Activated CD8-positive, alpha-beta T cell treated with anti-CD3 and anti-CD28 coated beads, Interleukin-2, amount 10 ng/mL, durations not matched to agents 7 days and 5 days (primary cell): ENCODE measurements at regions of chr17 and their contacts with region 1.

Region 1: DNA sequence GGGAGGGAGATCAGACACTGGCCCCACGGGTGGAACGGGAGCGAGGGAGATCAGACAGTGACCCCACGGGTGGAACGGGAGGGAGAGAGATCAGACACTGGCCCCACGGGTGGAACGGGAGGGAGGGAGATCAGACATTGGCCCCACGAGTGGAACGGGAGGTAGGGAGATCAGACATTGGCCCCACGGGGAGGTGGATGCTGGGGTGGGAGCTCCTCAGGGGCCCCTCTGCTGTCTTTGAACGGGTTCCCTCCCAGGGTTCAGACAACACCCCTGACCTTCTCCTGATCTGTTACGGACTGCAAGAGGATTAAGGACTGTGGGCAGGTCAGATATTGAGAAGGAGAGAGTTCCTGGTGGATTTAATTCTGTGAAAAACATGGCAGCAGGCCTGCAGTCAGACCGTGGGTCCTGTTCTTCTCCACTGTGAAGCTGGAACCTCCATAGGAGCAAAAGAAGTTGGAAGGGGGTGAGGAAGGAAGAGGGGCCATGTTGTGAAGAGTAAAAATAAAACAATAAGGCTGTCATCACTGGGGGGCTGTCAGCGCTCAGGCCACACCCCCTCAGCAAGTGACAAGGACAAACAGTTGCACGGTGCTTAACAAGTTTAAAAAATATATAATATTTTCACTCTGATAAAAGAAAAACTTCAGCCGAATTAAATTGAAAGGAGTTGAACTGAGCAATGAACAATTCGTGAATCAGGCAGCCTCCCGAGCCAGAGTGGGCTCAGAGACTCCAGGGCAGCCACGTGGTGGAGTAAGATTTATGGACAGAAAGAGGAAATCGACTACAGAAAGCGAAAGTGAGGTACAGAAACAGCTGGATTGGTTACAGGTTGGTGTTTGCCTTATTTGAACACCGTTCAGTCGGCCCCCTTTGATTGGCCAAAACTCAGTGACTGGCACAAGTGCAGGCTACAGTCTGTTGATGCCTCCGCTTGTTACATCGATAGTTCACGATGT is 348.7 kb upstream of the TNRC6C start:
- DNase-seq: peak; percentile 88
- ATAC-seq: peak; percentile 98
- H3K4me3 Mint-ChIP-seq: peak overlapping the region; percentile 67
- H3K27ac Mint-ChIP-seq: peak overlapping the region; percentile 92
- H3K4me1 Mint-ChIP-seq: peaks cover 30% of the 10 kb centered on the region
- H3K27me3 Mint-ChIP-seq: peaks cover 5% of the 10 kb centered on the region

Region 2: GRCh38 chr17:77666881-77667395 is 57.1 kb after region 1 on chr17:
- CTCF ChIA-PET with region 1: interaction called, 3 read pairs
- POLR2A ChIA-PET with region 1: interaction called, 16 read pairs
- DNase-seq: peak; percentile 93
- ATAC-seq: peak; percentile 94
- H3K4me3 Mint-ChIP-seq: peak overlapping the region; percentile 82
- H3K27ac Mint-ChIP-seq: peak overlapping the region; percentile 97
- H3K4me1 Mint-ChIP-seq: peaks cover 51% of the 10 kb centered on the region
- H3K27me3 Mint-ChIP-seq: peaks cover 4% of the 10 kb centered on the region

Region 3: DNA sequence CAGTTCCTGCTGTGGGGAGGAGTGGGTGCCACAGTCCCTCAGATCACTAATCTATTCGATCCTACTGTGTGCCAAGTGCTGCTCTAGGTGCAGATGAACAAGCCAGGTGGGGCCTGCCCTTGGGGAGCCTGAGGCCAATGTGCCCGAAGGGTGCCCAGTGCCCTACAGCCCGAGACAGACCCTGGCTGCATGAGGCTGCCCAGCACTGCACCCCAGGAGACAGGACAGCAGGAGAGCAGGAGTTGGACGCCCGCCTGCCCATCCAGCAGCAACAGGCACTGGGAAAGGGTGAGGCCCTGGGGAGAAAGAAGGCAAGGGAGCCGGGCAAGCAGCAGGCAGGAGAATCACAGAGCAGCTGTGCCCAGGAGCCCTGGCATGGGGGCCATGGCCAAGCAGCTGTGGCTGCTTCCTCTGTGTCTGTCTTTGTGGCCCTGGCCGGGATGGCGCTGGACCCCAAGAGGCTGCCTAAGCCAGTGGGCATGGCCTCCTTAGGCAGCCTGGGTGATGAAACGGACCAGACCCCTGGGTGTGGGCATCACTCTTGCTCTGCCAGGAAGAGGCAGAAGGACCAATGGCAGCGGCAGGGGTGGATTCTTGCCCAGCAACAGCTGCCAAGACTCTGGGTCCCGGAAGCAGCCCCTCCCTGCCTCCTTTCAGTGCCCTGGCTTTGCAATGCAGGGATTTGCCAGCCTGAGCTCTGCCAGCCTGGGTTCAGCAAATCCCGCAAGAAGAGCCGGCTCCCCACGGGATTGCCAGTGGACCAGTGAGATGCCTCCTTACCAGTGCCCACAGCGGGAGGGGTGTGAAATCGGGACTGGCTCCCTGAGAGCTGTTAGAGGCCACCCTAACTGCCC is 169.0 kb after region 1 on chr17:
- CTCF ChIA-PET with region 1: no interaction called
- POLR2A ChIA-PET with region 1: no interaction called
- DNase-seq: no peak
- ATAC-seq: no peak
- H3K4me3 Mint-ChIP-seq: no peak overlapping the region
- H3K27ac Mint-ChIP-seq: no peak overlapping the region
- H3K4me1 Mint-ChIP-seq: peaks cover 10% of the 10 kb centered on the region
- H3K27me3 Mint-ChIP-seq: no peaks in the 10 kb centered on the region